Mammary epithelial cell (primary cell): ENCODE measurements at regions of chr6 and their contacts with region 1.

Region 1: DNA sequence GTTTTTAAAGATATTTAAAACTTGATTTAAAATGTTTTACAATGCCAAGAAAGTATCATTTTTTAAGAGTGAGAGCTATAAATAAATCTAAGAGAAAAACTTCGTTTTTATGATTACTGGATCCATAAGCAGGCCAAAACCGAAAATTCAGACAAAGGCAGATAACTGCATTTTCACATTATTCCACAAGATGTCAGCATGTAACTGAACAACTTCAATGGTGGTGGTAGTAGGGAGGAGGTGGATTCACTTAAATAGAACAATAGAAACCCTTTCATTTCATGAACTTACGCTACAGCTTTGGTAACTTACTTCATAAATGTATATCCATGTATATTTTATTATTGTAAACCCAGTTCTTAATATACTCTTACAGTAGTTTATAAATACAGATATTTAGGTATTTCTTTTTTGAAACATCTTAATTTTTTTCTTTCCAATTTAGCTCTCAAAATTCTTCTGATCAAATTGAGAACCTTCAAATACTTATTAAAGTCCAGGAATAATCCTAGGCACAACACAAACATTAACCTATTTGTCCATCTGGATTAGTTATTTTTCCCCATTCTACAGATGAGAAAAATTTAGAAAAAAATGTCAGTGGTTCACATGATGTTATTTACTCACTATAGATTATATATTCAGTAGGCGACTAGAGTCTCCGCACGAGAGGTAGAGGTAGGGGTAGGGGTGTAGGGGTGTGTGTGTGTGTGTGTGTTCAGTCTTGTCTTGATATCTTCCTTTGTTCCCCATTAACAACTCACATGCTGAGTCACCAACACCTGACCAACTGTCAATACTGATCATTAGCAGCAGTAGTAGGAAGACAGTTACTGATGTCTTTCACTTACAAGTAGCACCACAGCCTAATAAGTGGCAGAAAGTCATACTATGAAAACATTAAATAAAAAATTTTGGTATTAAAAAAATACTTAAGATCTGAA is 111.5 kb downstream of the ARHGAP18 start:
- DNase-seq: peak; percentile 53
- H3K4me3 ChIP-seq: no peak overlapping the region
- H3K27ac ChIP-seq: no peak overlapping the region
- H3K4me1 ChIP-seq: peaks cover 6% of the 10 kb centered on the region
- H3K27me3 ChIP-seq: no peaks in the 10 kb centered on the region
- CTCF ChIP-seq: peak; percentile 73 to 90

Region 2: DNA sequence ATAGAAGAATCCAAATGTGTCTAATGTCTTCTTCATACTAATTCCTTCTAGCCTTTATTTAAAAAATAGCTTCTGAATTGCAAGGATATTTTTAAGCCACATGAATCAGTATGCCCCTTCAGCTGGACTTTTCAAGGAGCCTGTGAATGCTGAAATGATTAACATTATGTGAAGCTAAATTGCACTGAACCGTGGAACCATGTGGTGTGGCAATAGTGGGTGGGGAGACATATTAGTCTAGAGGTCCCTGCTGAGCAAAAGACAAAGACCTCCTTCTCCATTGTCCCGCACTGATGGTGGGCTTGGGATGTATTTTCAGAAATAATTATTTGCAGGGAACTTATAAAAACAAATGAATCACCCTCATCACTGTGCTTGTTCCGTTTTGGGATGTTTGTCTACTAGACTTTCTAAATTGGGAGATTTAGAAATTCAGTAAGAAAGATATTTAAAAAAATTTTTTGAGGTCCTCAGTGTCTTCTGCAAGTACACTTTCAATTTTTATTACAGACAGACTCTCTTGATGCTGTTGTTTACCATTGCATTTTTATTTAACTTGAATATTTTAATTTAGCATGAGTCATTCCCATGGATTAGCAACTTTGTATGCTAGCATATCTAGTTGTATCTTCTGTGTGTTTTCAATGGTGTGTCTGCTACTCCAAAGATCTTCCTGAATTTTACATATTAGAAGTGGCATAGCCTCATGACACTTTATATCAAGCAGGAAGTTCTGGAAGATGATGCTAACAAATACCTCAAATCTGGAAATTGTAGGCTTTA is 477.5 kb before region 1 on chr6:
- CTCF ChIA-PET with region 1: no interaction called
- dilution Hi-C with region 1: no loop called
- in situ Hi-C with region 1: no loop called
- intact Hi-C with region 1: no loop called
- DNase-seq: no peak
- H3K4me3 ChIP-seq: no peak overlapping the region
- H3K27ac ChIP-seq: no peak overlapping the region
- H3K4me1 ChIP-seq: no peaks in the 10 kb centered on the region
- H3K27me3 ChIP-seq: no peaks in the 10 kb centered on the region
- CTCF ChIP-seq: no peak

Region 3: DNA sequence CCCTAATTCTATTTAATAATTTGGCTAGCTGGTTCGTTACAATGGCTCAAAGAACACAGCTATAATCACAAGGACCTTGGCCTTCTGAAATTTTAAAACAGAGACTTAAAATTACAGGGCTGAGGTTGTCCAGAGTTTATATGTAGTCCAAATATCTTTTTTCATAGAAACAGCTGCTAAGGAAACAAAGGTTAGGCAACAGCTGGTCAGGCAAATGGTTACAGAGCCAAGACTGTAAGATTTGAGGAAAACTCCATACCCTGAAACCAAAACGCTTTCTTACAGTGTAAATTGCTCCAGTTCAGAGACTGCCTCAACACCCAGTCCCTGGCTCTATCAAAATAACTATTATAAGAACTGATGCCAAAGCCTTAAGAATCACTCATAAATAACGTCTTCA is 121.2 kb after region 1 on chr6:
- CTCF ChIA-PET with region 1: no interaction called
- dilution Hi-C with region 1: no loop called
- in situ Hi-C with region 1: loop called in 1 of 2 experiments (anchors 10 kb)
- intact Hi-C with region 1: no loop called
- DNase-seq: no peak
- H3K4me3 ChIP-seq: no peak overlapping the region
- H3K27ac ChIP-seq: no peak overlapping the region
- H3K4me1 ChIP-seq: peaks cover 6% of the 10 kb centered on the region
- H3K27me3 ChIP-seq: no peaks in the 10 kb centered on the region
- CTCF ChIP-seq: no peak

Region 4: GRCh38 chr6:129748212-129748900 is 149.8 kb after region 1 on chr6:
- CTCF ChIA-PET with region 1: no interaction called
- dilution Hi-C with region 1: loop called (anchors 10 kb)
- in situ Hi-C with region 1: loop called in 1 of 2 experiments (anchors 10 kb)
- intact Hi-C with region 1: no loop called
- DNase-seq: peak; percentile 70
- H3K4me3 ChIP-seq: no peak overlapping the region
- H3K27ac ChIP-seq: peak overlapping the region; percentile 91
- H3K4me1 ChIP-seq: peaks cover 43% of the 10 kb centered on the region
- H3K27me3 ChIP-seq: no peaks in the 10 kb centered on the region
- CTCF ChIP-seq: peak in 1 of 2 donors; percentile 42

Region 5: DNA sequence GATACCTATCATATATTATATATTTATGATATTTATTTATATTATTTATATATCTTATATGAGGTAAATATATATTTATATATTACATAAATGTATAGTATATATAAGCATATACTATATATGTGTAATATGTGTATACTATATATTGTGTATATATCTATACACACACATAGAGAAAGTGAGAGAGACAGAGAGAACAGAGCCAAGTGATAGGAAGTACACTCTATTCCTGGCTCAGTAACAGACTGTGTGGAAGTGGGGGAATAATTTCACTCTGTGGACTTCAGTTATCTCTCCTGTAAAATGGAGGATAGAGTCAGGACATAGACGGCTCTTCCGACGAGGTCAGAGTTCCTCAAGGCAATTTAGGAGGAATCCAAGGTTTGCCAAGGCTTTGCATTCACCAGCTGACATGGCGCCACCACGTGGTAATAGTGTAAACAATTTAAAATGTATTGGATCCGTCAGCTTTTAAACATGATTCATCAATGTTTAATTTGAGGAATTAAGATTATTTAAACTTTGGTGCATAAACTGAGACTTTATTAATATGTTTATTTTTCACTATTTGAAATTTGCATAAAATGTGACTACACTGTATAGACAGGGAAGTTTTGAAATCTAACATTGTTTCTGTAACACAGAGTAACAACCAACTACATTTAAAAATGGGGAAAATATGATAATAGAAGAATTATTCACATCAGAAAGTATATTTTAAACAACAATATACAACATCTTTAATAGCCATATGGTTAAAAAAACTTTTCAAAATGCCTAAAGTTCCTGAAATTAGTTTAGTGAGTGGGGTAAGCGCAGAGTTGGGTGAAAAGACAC is 338.0 kb after region 1 on chr6:
- CTCF ChIA-PET with region 1: interaction called, 4 read pairs
- dilution Hi-C with region 1: no loop called
- in situ Hi-C with region 1: no loop called
- intact Hi-C with region 1: loop called (anchors 1 kb)
- DNase-seq: peak; percentile 62
- H3K4me3 ChIP-seq: peak overlapping the region in 1 of 3 experiments; percentile 6
- H3K27ac ChIP-seq: no peak overlapping the region
- H3K4me1 ChIP-seq: no peaks in the 10 kb centered on the region
- H3K27me3 ChIP-seq: no peaks in the 10 kb centered on the region
- CTCF ChIP-seq: peak; percentile 53 to 70

Region 6: GRCh38 chr6:130020907-130021629 is 422.6 kb after region 1 on chr6:
- CTCF ChIA-PET with region 1: no interaction called
- dilution Hi-C with region 1: no loop called
- in situ Hi-C with region 1: loop called (anchors 10 to 25 kb)
- intact Hi-C with region 1: loop called (anchors 1 kb)
- DNase-seq: peak; percentile 84
- H3K4me3 ChIP-seq: peak overlapping the region; percentile 57 to 78 (median 76)
- H3K27ac ChIP-seq: no peak overlapping the region
- H3K4me1 ChIP-seq: peaks cover 8% of the 10 kb centered on the region
- H3K27me3 ChIP-seq: no peaks in the 10 kb centered on the region
- CTCF ChIP-seq: peak; percentile 73 to 88